ENCODE measurements at regions of chr12 and their contacts with region 1.

Region 1: GRCh38 chr12:122399592-122400373 is 22.7 kb downstream of the CLIP1 start:
- DNase-seq: peak; percentile 69
- ATAC-seq: peak; percentile 69
- H3K4me3 Mint-ChIP-seq: no peak overlapping the region
- H3K27ac Mint-ChIP-seq: peak overlapping the region; percentile 68
- H3K4me1 Mint-ChIP-seq: peaks cover 34% of the 10 kb centered on the region
- H3K27me3 Mint-ChIP-seq: no peaks in the 10 kb centered on the region
- CTCF ChIP-seq: peak; percentile 77

Region 2: DNA sequence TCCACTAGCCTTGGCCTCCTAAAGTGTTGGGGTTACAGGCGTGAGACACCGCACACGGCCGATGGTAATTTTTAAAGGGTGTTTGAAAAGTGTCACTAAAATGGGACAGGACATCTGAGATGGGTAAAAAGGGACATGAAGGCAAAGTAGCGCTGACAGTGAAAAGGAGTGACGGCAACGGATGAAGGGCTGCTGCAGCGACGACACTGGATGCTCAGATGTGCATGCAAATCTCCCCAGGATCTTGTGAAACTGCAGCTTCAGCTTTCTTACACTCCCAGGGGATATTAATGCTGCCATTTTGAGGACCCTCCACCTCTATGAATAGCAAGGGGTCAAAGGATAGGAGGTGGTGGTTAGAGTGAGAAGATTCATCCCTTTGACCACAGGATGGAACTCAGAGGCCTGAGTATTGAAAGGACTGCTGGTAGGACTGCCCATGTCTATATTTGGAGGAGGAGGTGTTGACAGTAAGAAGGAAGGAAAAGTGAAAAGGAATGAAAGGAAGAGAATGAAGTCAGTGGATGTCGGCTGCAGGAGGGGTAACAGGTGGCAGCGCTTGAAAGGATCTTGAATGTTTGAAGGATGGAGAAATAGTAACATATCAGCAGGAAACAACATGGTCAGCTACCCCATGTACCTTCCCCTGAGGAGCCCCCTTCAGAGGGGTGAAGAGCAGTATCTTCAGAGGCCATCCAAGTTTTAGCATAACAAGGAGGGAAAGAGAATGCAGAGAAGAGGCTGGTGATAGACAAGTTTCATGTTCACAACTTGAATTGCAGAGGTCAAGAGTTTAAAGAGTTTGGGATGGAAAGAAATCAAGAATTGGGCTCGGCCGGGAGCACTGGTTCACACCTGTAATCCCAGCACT is 14.4 kb before region 1 on chr12:
- CTCF ChIA-PET with region 1: interaction called, 16 read pairs
- POLR2A ChIA-PET with region 1: interaction called, 3 read pairs
- intact Hi-C with region 1: no loop called
- DNase-seq: no peak
- ATAC-seq: no peak
- H3K4me3 Mint-ChIP-seq: no peak overlapping the region
- H3K27ac Mint-ChIP-seq: no peak overlapping the region
- H3K4me1 Mint-ChIP-seq: peaks cover 5% of the 10 kb centered on the region
- H3K27me3 Mint-ChIP-seq: no peaks in the 10 kb centered on the region
- CTCF ChIP-seq: no peak

Region 3: GRCh38 chr12:122413516-122414404 is 14.0 kb after region 1 on chr12:
- CTCF ChIA-PET with region 1: interaction called, 13 read pairs
- POLR2A ChIA-PET with region 1: interaction called, 4 read pairs
- intact Hi-C with region 1: no loop called
- DNase-seq: no peak
- ATAC-seq: no peak
- H3K4me3 Mint-ChIP-seq: no peak overlapping the region
- H3K27ac Mint-ChIP-seq: peak overlapping the region; percentile 93
- H3K4me1 Mint-ChIP-seq: peaks cover 34% of the 10 kb centered on the region
- H3K27me3 Mint-ChIP-seq: no peaks in the 10 kb centered on the region
- CTCF ChIP-seq: no peak

Region 4: DNA sequence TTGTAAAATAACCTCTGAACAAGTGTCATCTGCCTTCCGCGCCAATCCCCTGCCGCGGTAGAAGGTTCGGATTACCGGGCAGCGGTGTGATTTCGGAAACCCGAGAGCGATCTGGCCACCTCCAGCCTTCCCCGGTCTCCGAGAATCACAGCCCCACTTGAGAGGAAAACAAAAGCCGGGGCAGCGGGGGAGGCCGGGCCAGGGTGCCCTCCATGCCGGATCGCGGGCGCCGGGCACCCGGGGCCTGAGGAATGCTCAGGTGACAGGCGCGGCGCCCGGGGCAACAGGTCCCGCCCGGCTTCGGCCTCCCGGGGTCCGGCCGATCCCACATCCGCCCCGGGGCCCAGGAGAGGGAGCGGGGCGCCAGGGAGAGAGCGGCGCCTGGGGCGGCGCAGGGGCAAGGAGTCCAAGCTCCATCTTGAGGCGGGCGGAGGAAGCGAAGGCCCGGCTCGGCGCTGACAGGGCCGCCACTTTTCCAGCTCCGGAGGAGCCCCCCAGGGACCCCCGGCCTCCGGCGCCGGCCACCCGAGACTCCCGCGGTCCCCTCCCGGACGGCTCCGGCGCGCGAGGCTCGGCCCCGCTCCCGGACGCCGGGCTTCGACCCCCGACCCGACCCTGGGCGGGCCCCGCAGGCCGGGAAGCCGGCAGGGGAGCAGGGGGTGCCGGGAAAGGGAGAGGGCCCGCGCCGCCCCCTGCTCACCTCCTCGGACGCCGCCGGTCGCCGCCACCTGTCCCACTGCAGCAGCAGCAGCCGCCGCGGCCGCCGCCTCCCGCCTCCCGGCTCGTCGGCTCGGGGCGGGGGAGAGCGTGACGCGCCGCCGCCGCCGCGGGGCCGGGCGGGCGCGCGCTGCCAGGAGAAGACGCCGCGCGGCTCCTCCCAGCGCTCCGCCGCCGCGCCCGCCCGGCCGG is 22.3 kb after region 1 on chr12 and contains the start of gene CLIP1:
- CTCF ChIA-PET with region 1: interaction called, 20 read pairs
- POLR2A ChIA-PET with region 1: interaction called, 10 read pairs
- intact Hi-C with region 1: no loop called
- DNase-seq: peak; percentile 62
- ATAC-seq: peak; percentile 78
- H3K4me3 Mint-ChIP-seq: peak within 1 kb of the TSS; percentile 94
- H3K27ac Mint-ChIP-seq: peak within 1 kb of the TSS; percentile 87
- H3K4me1 Mint-ChIP-seq: peaks cover 31% of the 10 kb centered on the region
- H3K27me3 Mint-ChIP-seq: no peaks in the 10 kb centered on the region
- CTCF ChIP-seq: peak; percentile 60
- total RNA-seq, gene CLIP1: 29.4 to 32.4 TPM

Region 5: DNA sequence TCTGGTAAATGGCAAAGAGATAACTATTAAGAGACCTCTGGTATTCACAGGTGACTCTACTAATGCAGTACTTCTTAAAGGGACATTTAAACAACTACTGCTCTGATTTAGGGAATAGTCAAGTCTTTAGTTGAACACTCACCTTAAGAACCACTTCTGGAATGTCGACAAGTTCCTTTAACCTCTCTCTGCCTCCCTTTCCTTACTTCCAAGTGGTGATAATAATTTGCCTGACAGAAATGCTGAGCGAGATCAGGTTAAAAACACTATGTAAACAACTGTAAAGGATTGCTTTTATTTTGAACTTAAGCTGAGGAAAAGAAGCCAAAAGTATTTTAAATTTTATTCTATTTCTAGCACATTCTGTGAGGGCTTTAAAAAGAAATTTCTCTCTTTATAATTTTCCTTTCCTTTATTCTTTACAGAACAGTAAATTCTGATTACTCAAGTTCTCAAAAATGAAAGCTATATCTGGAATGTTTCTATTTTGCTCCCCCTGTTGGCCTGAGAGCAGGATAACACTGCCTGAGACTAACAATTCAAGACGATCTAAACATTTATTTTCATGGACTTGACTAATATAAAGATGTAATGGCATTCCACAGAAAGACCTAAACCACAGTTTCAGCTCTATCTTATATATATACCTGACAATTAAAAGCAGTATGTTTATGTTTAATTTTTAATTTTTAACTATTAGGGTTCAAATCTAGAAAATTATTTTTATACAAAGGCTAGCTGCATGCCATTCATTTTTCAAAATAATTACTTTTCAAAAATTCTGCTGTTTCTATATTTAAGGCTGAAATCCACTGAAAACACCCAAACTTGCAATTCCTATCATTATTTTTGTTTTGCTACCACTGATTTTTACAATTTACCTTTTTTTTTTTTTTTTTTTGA is 71.8 kb after region 1 on chr12:
- CTCF ChIA-PET with region 1: interaction called, 209 read pairs
- POLR2A ChIA-PET with region 1: interaction called, 15 read pairs
- intact Hi-C with region 1: loop called (anchors 1 kb)
- DNase-seq: no peak
- ATAC-seq: peak; percentile 53
- H3K4me3 Mint-ChIP-seq: no peak overlapping the region
- H3K27ac Mint-ChIP-seq: peak overlapping the region; percentile 32
- H3K4me1 Mint-ChIP-seq: peaks cover 30% of the 10 kb centered on the region
- H3K27me3 Mint-ChIP-seq: no peaks in the 10 kb centered on the region
- CTCF ChIP-seq: peak; percentile 84

Measured in activated CD8-positive, alpha-beta T cell treated with anti-CD3 and anti-CD28 coated beads for 36 hours (primary cell).